ENCODE measurements at regions of chr11 and their contacts with region 1.

Region 1: GRCh38 chr11:1335811-1336761 is 26.7 kb upstream of the TOLLIP start:
- DNase-seq: peak; percentile 38
- H3K4me3 Mint-ChIP-seq: peak overlapping the region; percentile 77
- H3K27ac Mint-ChIP-seq: peak overlapping the region; percentile 59
- H3K4me1 Mint-ChIP-seq: peaks cover 8% of the 10 kb centered on the region
- H3K27me3 Mint-ChIP-seq: peaks cover 9% of the 10 kb centered on the region

Region 2: DNA sequence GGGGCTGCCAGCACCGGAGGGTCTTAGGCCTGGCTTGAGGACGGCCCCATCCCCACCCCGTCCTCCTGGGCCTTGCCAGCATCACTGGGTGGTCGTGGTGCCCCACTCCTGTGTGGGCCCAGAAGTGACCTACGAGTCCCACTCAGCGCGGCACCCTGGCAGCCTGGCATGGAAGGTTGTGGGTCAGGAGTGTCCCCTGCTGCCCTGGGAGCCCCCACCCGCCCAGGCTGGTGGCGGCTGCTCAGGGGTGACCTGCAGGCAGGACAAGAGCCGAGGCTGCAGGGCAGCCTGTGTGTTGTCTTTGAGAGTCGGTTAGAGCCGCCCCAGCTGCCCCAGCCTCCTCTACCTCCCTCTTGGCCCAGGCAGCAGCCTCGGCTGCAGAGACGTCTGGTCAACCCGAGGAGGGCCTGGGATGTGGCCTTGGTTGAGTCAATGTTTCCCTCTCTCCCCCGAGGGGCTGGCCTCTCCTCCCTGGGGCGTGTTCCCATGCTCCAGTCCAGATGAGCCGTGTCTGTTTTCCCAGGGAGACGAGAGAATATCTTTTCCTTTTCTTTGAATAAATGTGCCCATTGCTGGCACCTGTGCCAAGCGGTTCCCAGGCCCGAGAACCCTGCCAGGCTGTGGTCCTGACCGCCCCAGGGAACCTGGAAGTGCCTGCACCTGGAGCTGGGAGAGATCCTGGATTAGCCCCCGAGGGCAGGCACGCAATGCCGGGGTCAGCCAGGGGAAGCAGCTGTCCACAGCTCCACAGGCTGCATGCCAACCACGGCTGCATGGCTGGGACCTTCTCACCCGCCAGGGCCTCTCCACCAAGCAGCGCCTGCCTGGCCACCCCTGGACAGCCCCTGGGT is 214.0 kb before region 1 on chr11:
- intact Hi-C with region 1: no loop called
- DNase-seq: no peak
- H3K4me3 Mint-ChIP-seq: no peak overlapping the region
- H3K27ac Mint-ChIP-seq: no peak overlapping the region
- H3K4me1 Mint-ChIP-seq: no peaks in the 10 kb centered on the region
- H3K27me3 Mint-ChIP-seq: no peaks in the 10 kb centered on the region

Region 3: DNA sequence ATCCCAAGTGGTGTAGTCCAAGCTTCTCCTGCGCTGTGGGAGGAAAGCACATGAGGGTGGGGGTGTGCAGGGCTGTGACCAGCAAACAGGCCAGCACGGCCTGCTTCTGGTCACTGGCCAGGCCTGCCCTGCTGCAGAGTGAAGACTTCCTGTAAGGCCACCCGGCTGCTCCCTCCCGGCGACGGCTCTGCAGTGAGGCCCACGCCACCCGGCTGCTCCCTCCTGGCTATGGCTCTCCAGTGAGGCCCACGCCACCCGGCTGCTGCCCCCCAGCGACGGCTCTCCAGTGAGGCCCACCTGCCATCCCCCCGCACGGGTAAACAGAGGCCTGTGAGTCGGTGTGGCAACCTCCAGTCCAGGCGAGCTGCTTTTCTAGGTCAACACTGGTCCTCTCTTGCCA is 22.2 kb after region 1 on chr11:
- intact Hi-C with region 1: no loop called
- DNase-seq: no peak
- H3K4me3 Mint-ChIP-seq: no peak overlapping the region
- H3K27ac Mint-ChIP-seq: no peak overlapping the region
- H3K4me1 Mint-ChIP-seq: no peaks in the 10 kb centered on the region
- H3K27me3 Mint-ChIP-seq: no peaks in the 10 kb centered on the region

Region 4: DNA sequence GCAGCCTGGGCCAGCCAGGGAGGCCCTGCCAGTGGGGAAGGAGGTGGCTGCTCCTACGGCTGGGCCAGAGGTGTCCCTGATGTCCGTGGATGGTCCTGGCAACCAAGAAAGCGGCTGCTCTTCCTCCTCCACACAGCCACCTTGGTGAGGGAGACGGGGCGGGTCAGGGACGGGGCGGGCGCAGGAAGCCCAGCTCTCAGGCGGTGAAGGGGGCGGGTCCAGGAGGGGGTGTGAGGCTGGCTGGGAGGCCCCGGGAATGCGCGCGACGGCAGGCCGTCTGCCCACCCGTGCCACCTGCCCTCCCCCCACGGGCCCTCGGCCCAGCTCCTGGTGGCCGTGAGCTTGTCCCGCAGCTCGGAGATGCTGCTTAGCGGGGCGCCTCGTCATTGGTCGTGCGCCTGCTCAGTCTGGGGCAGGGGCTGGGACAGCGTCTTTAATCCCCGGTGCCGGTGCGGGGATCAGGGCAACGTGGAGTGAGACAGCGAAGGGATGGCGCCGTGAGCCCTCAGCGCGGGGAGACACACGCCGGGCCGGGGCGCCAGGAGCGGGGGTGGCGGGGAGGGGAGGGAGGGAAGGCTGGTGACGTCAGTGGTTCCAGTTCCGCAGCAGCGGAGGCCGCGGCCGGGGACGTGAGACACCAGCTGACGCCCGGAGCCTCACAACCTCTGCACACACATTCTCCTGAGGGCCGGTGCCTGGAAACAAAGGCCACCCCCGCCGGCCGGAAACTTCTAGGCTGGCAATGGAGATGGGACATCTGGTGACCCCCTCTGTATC is 46.9 kb after region 1 on chr11:
- intact Hi-C with region 1: loop called (anchors 2 kb)
- DNase-seq: peak; percentile 55
- H3K4me3 Mint-ChIP-seq: peak overlapping the region; percentile 76
- H3K27ac Mint-ChIP-seq: peak overlapping the region; percentile 73
- H3K4me1 Mint-ChIP-seq: peaks cover 11% of the 10 kb centered on the region
- H3K27me3 Mint-ChIP-seq: peaks cover 31% of the 10 kb centered on the region

Region 5: DNA sequence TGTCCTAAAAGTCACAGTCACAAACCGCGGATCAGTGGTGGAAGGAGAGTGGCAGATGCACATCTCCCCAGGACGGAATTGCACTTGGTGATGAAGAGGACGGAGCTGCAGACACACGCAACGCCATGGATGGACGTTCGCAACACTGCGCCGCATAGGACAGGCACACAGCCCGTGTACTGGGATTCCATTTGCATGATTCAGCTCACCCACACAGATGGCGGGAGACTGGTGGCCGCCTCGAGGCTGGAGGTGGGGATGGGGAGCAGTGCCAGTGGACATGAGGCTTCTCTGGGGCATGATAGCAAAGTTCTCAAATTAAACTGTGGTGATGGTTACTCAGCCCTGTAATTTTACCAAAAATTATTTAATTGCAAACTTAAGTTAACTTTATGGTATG is 198.6 kb after region 1 on chr11:
- intact Hi-C with region 1: no loop called
- DNase-seq: no peak
- H3K4me3 Mint-ChIP-seq: no peak overlapping the region
- H3K27ac Mint-ChIP-seq: no peak overlapping the region
- H3K4me1 Mint-ChIP-seq: no peaks in the 10 kb centered on the region
- H3K27me3 Mint-ChIP-seq: no peaks in the 10 kb centered on the region

Region 6: GRCh38 chr11:1782831-1783724 is 447.0 kb after region 1 on chr11:
- intact Hi-C with region 1: no loop called
- DNase-seq: no peak
- H3K4me3 Mint-ChIP-seq: no peak overlapping the region
- H3K27ac Mint-ChIP-seq: no peak overlapping the region
- H3K4me1 Mint-ChIP-seq: no peaks in the 10 kb centered on the region
- H3K27me3 Mint-ChIP-seq: peaks cover 3% of the 10 kb centered on the region

Measured in activated T-helper 1 cell treated with anti-CD3 and anti-CD28 coated beads, Interleukin-12 subunit alpha, Interleukin-12 subunit beta, Interleukin-2, Interleukin-4 antibody, amounts not matched to agents 30 ng/mL and 10 ng/mL and 1 ng/mL, durations not matched to agents 14 hours and 24 hours and 36 hours (primary cell).